ENCODE measurements at regions of chr18 and their contacts with region 1.

Region 1: DNA sequence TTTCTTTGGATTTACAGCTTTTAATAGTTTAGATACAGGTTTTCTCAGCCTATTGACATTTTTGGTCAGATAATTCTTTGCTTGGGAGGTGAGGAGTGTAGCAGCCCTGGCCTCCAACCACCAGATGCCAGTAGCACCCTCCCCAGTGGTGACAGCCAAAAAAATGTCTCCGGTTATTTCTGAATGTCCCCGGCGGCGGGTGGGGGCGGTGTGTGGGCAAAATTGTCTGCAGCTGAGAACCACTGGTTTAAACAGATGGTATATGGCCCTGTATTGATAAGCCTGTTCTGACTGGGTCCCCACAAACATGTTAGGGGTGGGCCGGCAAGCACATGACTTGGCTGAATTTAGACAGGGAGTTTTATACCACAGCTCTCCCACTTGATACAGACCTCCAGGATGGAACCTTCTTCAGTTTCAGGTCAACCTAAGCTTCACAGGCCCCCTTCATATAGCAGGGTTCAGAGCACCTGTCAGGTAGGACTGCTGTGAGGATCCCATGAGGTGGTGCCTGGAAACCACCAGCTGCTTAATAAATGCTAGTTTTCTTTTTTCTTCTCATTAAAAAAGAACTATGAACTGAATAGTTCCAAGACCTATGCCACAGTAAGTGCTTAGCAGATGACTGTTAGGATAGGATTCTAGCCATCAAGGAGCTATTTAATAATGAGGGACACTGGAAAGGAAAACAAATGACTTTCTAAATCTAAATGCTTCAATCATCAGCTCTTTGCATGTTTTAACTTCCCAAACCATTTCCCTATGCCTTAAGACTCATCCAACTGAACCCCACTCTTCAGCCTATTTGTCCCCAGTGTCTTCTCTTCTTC is 18.1 kb downstream of the LPIN2 start:
- DNase-seq: peak; percentile 58
- H3K4me3 Mint-ChIP-seq: peak overlapping the region; percentile 60
- H3K27ac Mint-ChIP-seq: peak overlapping the region; percentile 83
- H3K4me1 Mint-ChIP-seq: peaks cover 82% of the 10 kb centered on the region
- H3K27me3 Mint-ChIP-seq: no peaks in the 10 kb centered on the region

Region 2: GRCh38 chr18:2417861-2418610 is 576.8 kb before region 1 on chr18:
- intact Hi-C with region 1: no loop called
- DNase-seq: no peak
- H3K4me3 Mint-ChIP-seq: no peak overlapping the region
- H3K27ac Mint-ChIP-seq: no peak overlapping the region
- H3K4me1 Mint-ChIP-seq: no peaks in the 10 kb centered on the region
- H3K27me3 Mint-ChIP-seq: peaks cover 3% of the 10 kb centered on the region

Region 3: DNA sequence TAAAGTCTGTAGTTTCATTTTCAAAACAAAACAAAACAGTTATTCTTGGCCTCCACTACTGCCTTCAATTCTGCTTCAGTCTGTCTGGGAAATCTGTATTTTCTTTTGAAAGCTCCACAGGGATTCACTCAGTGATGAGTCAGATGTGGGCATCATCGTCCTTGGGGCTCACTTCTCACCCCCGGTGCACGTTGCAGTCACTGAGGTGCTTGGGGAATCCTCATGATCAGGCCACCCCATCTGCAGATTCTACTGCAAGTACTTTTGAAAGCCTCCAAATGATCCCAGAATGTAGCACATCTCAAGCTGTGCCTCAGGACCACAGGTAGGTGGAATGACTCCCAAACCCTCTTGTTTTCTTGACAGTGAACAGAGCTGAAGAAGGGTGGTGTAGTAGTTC is 16.2 kb before region 1 on chr18:
- intact Hi-C with region 1: loop called (anchors 1 kb)
- DNase-seq: no peak
- H3K4me3 Mint-ChIP-seq: peak overlapping the region; percentile 71
- H3K27ac Mint-ChIP-seq: peak overlapping the region; percentile 89
- H3K4me1 Mint-ChIP-seq: peaks cover 90% of the 10 kb centered on the region
- H3K27me3 Mint-ChIP-seq: no peaks in the 10 kb centered on the region

Measured in activated T-helper 1 cell treated with anti-CD3 and anti-CD28 coated beads, Interleukin-12 subunit alpha, Interleukin-12 subunit beta, Interleukin-2, Interleukin-4 antibody, amounts not matched to agents 30 ng/mL and 10 ng/mL and 1 ng/mL, durations not matched to agents 14 hours and 24 hours and 36 hours (primary cell).